Endothelial cell of umbilical vein (primary cell): ENCODE measurements at regions of chr12 and their contacts with region 1.

Region 1: GRCh38 chr12:39372929-39373328 is 70.0 kb downstream of the KIF21A start:
- DNase-seq: peak; percentile 19
- H3K4me3 ChIP-seq: no peak overlapping the region
- H3K27ac ChIP-seq: no peak overlapping the region
- H3K4me1 ChIP-seq: peaks cover 6% of the 10 kb centered on the region
- H3K27me3 ChIP-seq: no peaks in the 10 kb centered on the region
- CTCF ChIP-seq: no peak
- POLR2A ChIP-seq: no peak

Region 2: GRCh38 chr12:39343665-39344064 is 29.3 kb before region 1 on chr12:
- CTCF ChIA-PET with region 1: interaction called, 6 read pairs
- POLR2A ChIA-PET with region 1: no interaction called
- dilution Hi-C with region 1: no loop called
- intact Hi-C with region 1: loop called (anchors 2 kb)
- DNase-seq: no peak
- H3K4me3 ChIP-seq: no peak overlapping the region
- H3K27ac ChIP-seq: no peak overlapping the region
- H3K4me1 ChIP-seq: no peaks in the 10 kb centered on the region
- H3K27me3 ChIP-seq: no peaks in the 10 kb centered on the region
- CTCF ChIP-seq: no peak
- POLR2A ChIP-seq: no peak

Region 3: DNA sequence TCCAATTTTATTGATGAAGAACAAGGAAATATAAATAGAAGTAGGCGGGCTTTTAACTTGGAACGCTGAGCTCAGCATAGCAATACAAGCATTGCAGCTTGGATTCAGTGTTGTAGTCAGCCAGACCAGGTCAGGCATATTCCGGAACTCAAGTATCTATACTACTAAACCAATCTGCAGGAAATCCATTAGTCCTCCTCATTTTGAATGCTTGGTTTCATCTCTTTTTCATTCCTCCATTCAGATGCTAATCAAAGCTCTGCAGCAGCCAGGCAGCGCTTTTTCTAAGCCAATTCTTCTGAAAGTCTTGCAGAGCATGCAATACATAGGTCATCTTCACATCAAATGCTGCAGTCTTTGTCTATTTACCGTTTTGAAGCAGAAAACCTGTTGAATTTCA is 21.0 kb after region 1 on chr12:
- CTCF ChIA-PET with region 1: interaction called, 3 read pairs
- POLR2A ChIA-PET with region 1: no interaction called
- dilution Hi-C with region 1: no loop called
- intact Hi-C with region 1: loop called (anchors 2 kb)
- DNase-seq: no peak
- H3K4me3 ChIP-seq: no peak overlapping the region
- H3K27ac ChIP-seq: no peak overlapping the region
- H3K4me1 ChIP-seq: no peaks in the 10 kb centered on the region
- H3K27me3 ChIP-seq: no peaks in the 10 kb centered on the region
- CTCF ChIP-seq: no peak
- POLR2A ChIP-seq: no peak